Heart left ventricle (tissue), 16 donors: ENCODE measurements at regions of chr2 and their contacts with region 1.

Region 1: DNA sequence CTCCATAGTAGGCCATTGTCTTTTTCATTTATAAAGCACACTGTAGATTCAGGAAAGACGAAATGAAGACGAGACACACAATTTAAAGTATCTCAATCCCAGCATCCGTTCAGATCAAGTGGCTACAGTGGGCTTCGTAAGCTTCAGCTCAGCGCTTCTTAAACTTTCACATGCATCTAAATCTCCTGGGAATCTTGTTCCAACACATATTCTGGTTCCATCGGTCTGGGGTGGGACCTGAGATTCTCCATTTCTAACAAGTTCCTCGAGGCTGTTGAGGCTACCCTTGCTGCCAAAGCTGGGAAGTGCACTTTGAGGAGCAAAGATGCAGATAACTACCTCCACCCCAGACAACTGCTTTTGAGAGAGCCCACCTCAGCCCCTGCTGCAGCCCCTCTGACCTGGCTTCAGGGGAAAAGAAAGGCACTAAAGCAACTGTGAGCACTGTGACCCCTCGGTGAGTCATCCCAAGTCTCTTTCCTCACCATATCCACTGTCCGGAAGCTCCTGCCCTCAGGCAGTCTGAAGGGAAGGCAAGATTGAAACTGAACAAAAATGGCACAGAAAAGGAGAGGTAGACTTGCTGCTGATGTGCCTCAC is 201.1 kb upstream of the FBXO11 start:
- DNase-seq: no peak
- ATAC-seq: no peak
- H3K4me3 ChIP-seq: peak overlapping the region in 2 of 12 donors; percentile 27 to 33
- H3K27ac ChIP-seq: peak overlapping the region in 10 of 12 donors; percentile 2 to 59 (median 50)
- H3K4me1 ChIP-seq: peaks cover 0 to 35% (median 12%) of the 10 kb centered on the region in 12 donors
- H3K27me3 ChIP-seq: no peaks in the 10 kb centered on the region
- CTCF ChIP-seq: no peak
- POLR2A ChIP-seq: no peak

Region 2: GRCh38 chr2:47437287-47437686 is 670.1 kb before region 1 on chr2:
- intact Hi-C with region 1: loop called in 5 of 10 experiments (anchors 2 to 10 kb)
- DNase-seq: peak in 1 of 5 donors; percentile 15
- ATAC-seq: peak in 2 of 4 donors; percentile 36 to 41
- H3K4me3 ChIP-seq: no peak overlapping the region
- H3K27ac ChIP-seq: no peak overlapping the region
- H3K4me1 ChIP-seq: no peaks in the 10 kb centered on the region
- H3K27me3 ChIP-seq: no peaks in the 10 kb centered on the region
- CTCF ChIP-seq: peak; percentile 24 to 73 (median 57)
- POLR2A ChIP-seq: no peak

Region 3: GRCh38 chr2:47782671-47783485 is 324.5 kb before region 1 on chr2 and contains the start of gene MSH6:
- intact Hi-C with region 1: loop called in 4 of 10 experiments (anchors 5 to 10 kb)
- DNase-seq: peak; percentile 90 to 94 (median 91)
- ATAC-seq: peak; percentile 89 to 99 (median 98)
- H3K4me3 ChIP-seq: peak within 1 kb of the TSS; percentile 65 to 97 (median 88)
- H3K27ac ChIP-seq: peak within 1 kb of the TSS; percentile 54 to 95 (median 90)
- H3K4me1 ChIP-seq: peaks cover 0 to 38% (median 10%) of the 10 kb centered on the region in 12 donors
- H3K27me3 ChIP-seq: no peaks in the 10 kb centered on the region
- CTCF ChIP-seq: peak in 3 of 12 donors; percentile 6 to 19 (median 15)
- POLR2A ChIP-seq: peak in 1 of 2 donors; percentile 86
- total RNA-seq, gene MSH6: 19.6 to 40.7 (median 23.3) TPM

Region 4: GRCh38 chr2:47917276-47917961 is 190.0 kb before region 1 on chr2:
- intact Hi-C with region 1: loop called in 1 of 10 experiments (anchors 10 kb)
- DNase-seq: no peak
- ATAC-seq: no peak
- H3K4me3 ChIP-seq: no peak overlapping the region
- H3K27ac ChIP-seq: peak overlapping the region in 1 of 12 donors; percentile 42
- H3K4me1 ChIP-seq: no peaks in the 10 kb centered on the region
- H3K27me3 ChIP-seq: no peaks in the 10 kb centered on the region
- CTCF ChIP-seq: no peak
- POLR2A ChIP-seq: no peak

Region 5: GRCh38 chr2:47996808-47997207 is 110.6 kb before region 1 on chr2:
- intact Hi-C with region 1: no loop called
- DNase-seq: no peak
- ATAC-seq: no peak
- H3K4me3 ChIP-seq: no peak overlapping the region
- H3K27ac ChIP-seq: no peak overlapping the region
- H3K4me1 ChIP-seq: no peaks in the 10 kb centered on the region
- H3K27me3 ChIP-seq: no peaks in the 10 kb centered on the region
- CTCF ChIP-seq: no peak
- POLR2A ChIP-seq: no peak